ENCODE measurements at regions of chr3 and their contacts with region 1.

Region 1: GRCh38 chr3:185959609-185960517 is 22.0 kb upstream of the TRA2B start:
- DNase-seq: peak; percentile 74 to 91
- H3K4me3 ChIP-seq: peak overlapping the region; percentile 77
- H3K27ac ChIP-seq: peak overlapping the region; percentile 96
- H3K4me1 ChIP-seq: peaks cover 49% of the 10 kb centered on the region
- H3K27me3 ChIP-seq: no peaks in the 10 kb centered on the region
- CTCF ChIP-seq: peak; percentile 11; the same call in 1 of the 2 replicates

Region 2: DNA sequence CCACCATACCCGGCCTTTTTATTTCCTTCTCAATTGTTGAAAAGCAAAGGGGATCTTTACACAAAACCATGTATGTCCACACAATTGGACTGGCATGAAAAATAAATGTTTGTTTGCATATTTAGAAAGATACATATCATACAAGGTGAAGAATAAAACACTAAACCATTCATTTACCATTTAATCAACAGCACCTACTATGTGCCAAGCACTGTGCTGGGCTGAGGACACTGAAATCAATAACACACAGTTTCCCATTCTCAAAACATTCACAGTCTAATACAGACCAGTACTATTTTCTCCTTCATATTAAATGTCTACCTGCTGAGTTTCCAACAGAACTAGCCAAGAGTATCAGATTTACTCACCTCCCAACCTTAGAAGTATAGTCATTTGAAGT is 219.7 kb before region 1 on chr3:
- CTCF ChIA-PET with region 1: interaction called, 4 read pairs
- POLR2A ChIA-PET with region 1: interaction called, 11 read pairs
- intact Hi-C with region 1: no loop called
- DNase-seq: no peak
- H3K4me3 ChIP-seq: no peak overlapping the region
- H3K27ac ChIP-seq: no peak overlapping the region
- H3K4me1 ChIP-seq: peaks cover 22% of the 10 kb centered on the region
- H3K27me3 ChIP-seq: no peaks in the 10 kb centered on the region
- CTCF ChIP-seq: no peak

Region 3: GRCh38 chr3:185937689-185938463 is 22.0 kb before region 1 on chr3 and contains the start of gene TRA2B:
- CTCF ChIA-PET with region 1: interaction called, 45 read pairs
- POLR2A ChIA-PET with region 1: interaction called, 21 read pairs
- intact Hi-C with region 1: loop called (anchors 1 kb)
- DNase-seq: peak; percentile 93 to 99
- H3K4me3 ChIP-seq: peak within 1 kb of the TSS; percentile 98
- H3K27ac ChIP-seq: peak within 1 kb of the TSS; percentile 95
- H3K4me1 ChIP-seq: peaks cover 64% of the 10 kb centered on the region
- H3K27me3 ChIP-seq: no peaks in the 10 kb centered on the region
- CTCF ChIP-seq: peak; percentile 22; the same call in 1 of the 2 replicates
- total RNA-seq, gene TRA2B: 117 and 158 TPM in 2 replicates

Region 4: DNA sequence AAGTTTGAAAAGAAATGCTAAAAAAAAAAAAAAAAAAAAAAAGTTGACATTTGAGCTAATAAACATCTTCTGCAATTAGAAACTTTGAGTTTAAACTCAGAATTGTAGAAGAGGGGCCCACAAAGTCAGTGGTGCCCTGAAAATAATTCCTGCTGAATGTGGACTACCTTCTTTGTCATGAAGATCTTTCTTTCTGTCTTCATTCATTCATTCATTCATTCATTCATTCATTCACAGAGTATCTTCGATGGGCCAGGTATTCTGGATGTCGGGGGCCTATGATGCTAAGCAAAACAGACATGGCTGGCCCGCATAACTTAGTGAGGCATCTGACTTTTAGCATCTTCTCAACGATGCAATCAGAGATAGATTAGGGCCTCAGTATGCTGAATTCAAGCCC is 124.4 kb after region 1 on chr3:
- CTCF ChIA-PET with region 1: no interaction called
- POLR2A ChIA-PET with region 1: interaction called, 19 read pairs
- intact Hi-C with region 1: no loop called
- DNase-seq: no peak
- H3K4me3 ChIP-seq: no peak overlapping the region
- H3K27ac ChIP-seq: no peak overlapping the region
- H3K4me1 ChIP-seq: no peaks in the 10 kb centered on the region
- H3K27me3 ChIP-seq: no peaks in the 10 kb centered on the region
- CTCF ChIP-seq: no peak

Measured in PC-9 (cell line).